ENCODE measurements at regions of chr19 and their contacts with region 1.

Region 1: GRCh38 chr19:38263689-38264485 is 486 bp upstream of the SPINT2 start:
- DNase-seq: peak; percentile 95
- ATAC-seq: peak; percentile 91
- H3K4me3 ChIP-seq: peak overlapping the region in 4 of 5 experiments; percentile 67 to 87 (median 71)
- H3K4me3 Mint-ChIP-seq: peak overlapping the region; percentile 98
- H3K27ac ChIP-seq: peak overlapping the region; percentile 83 to 98
- H3K27ac Mint-ChIP-seq: peak overlapping the region; percentile 99
- H3K4me1 ChIP-seq: peaks cover 20 to 26% of the 10 kb centered on the region in 2 donors
- H3K4me1 Mint-ChIP-seq: peaks cover 39% of the 10 kb centered on the region
- H3K27me3 ChIP-seq: no peaks in the 10 kb centered on the region
- H3K27me3 Mint-ChIP-seq: no peaks in the 10 kb centered on the region
- CTCF ChIP-seq: no peak

Region 2: GRCh38 chr19:38250821-38251563 is 12.9 kb before region 1 on chr19:
- CTCF ChIA-PET with region 1: interaction called, 15 read pairs
- POLR2A ChIA-PET with region 1: interaction called, 13 read pairs
- intact Hi-C with region 1: loop called (anchors 1 kb)
- DNase-seq: no peak
- ATAC-seq: no peak
- H3K4me3 ChIP-seq: no peak overlapping the region
- H3K4me3 Mint-ChIP-seq: peak overlapping the region; percentile 69
- H3K27ac ChIP-seq: no peak overlapping the region
- H3K27ac Mint-ChIP-seq: peak overlapping the region; percentile 91
- H3K4me1 ChIP-seq: peaks cover 48 to 51% of the 10 kb centered on the region in 2 donors
- H3K4me1 Mint-ChIP-seq: peaks cover 53% of the 10 kb centered on the region
- H3K27me3 ChIP-seq: no peaks in the 10 kb centered on the region
- H3K27me3 Mint-ChIP-seq: no peaks in the 10 kb centered on the region
- CTCF ChIP-seq: no peak

Region 3: GRCh38 chr19:38315657-38316476 is 52.0 kb after region 1 on chr19 and contains the start of gene YIF1B:
- CTCF ChIA-PET with region 1: interaction called, 3 read pairs
- POLR2A ChIA-PET with region 1: interaction called, 10 read pairs
- intact Hi-C with region 1: loop called (anchors 1 kb)
- DNase-seq: peak; percentile 96
- ATAC-seq: peak; percentile 91
- H3K4me3 ChIP-seq: peak within 1 kb of the TSS; percentile 62 to 90 (median 70)
- H3K4me3 Mint-ChIP-seq: peak within 1 kb of the TSS; percentile 96
- H3K27ac ChIP-seq: peak within 1 kb of the TSS; percentile 85 to 91
- H3K27ac Mint-ChIP-seq: peak within 1 kb of the TSS; percentile 96
- H3K4me1 ChIP-seq: peaks cover 29 to 47% of the 10 kb centered on the region in 2 donors
- H3K4me1 Mint-ChIP-seq: peaks cover 47% of the 10 kb centered on the region
- H3K27me3 ChIP-seq: peaks cover 0 to 2% (median 0%) of the 10 kb centered on the region in 4 experiments
- H3K27me3 Mint-ChIP-seq: no peaks in the 10 kb centered on the region
- CTCF ChIP-seq: no peak
- total RNA-seq, gene YIF1B: 30.6 and 31.6 TPM in 2 replicates

Region 4: GRCh38 chr19:38571682-38572081 is 307.8 kb after region 1 on chr19:
- CTCF ChIA-PET with region 1: no interaction called
- POLR2A ChIA-PET with region 1: no interaction called
- intact Hi-C with region 1: no loop called
- DNase-seq: no peak
- ATAC-seq: no peak
- H3K4me3 ChIP-seq: no peak overlapping the region
- H3K4me3 Mint-ChIP-seq: no peak overlapping the region
- H3K27ac ChIP-seq: no peak overlapping the region
- H3K27ac Mint-ChIP-seq: no peak overlapping the region
- H3K4me1 ChIP-seq: no peaks in the 10 kb centered on the region
- H3K4me1 Mint-ChIP-seq: peaks cover 6% of the 10 kb centered on the region
- H3K27me3 ChIP-seq: no peaks in the 10 kb centered on the region
- H3K27me3 Mint-ChIP-seq: peaks cover 3% of the 10 kb centered on the region
- CTCF ChIP-seq: no peak

Measured in B cell (primary cell).